ENCODE measurements at regions of chrX and their contacts with region 1.

Region 1: GRCh38 chrX:133670383-133670782 is 255.1 kb upstream of the GPC4 start:
- DNase-seq: peak in 1 of 2 experiments; percentile 13
- H3K4me3 ChIP-seq: no peak overlapping the region
- H3K27ac ChIP-seq: no peak overlapping the region
- H3K4me1 ChIP-seq: peaks cover 22% of the 10 kb centered on the region
- H3K27me3 ChIP-seq: no peaks in the 10 kb centered on the region
- CTCF ChIP-seq: peak; percentile 92

Region 2: DNA sequence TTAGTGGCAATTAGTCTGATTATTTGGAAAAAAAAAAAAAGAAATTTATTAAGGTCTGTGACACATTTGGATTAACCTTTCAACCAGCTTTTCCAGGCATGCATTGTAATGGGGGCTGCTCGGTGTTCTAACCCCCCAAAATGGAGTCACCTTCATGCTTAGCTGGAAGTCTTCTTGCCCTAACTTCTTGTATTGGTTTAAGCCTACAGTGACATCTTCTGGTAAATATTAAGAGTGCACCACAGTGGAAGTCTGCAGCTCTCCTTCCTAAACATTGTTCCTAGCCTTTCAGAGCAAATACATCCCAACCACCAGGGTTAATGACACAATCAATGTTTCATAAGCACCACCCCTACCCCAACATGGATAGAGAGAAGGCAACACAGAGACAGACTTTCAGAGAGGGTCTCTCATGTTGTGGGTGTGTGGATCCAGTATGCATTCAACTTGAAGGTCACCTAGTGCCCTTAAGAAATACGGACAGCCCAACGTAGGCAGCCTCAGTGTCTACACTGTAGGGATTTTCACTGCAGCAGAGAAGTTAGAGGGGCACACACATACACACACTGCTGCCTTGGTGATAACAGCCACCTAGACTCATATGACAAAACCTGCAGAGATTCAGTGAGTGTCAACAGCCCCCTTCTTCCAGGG is 1038.7 kb before region 1 on chrX:
- CTCF ChIA-PET with region 1: no interaction called
- POLR2A ChIA-PET with region 1: no interaction called
- intact Hi-C with region 1: loop called (anchors 5 kb)
- DNase-seq: peak; percentile 5 to 36
- H3K4me3 ChIP-seq: no peak overlapping the region
- H3K27ac ChIP-seq: no peak overlapping the region
- H3K4me1 ChIP-seq: no peaks in the 10 kb centered on the region
- H3K27me3 ChIP-seq: no peaks in the 10 kb centered on the region
- CTCF ChIP-seq: peak; percentile 76

Region 3: DNA sequence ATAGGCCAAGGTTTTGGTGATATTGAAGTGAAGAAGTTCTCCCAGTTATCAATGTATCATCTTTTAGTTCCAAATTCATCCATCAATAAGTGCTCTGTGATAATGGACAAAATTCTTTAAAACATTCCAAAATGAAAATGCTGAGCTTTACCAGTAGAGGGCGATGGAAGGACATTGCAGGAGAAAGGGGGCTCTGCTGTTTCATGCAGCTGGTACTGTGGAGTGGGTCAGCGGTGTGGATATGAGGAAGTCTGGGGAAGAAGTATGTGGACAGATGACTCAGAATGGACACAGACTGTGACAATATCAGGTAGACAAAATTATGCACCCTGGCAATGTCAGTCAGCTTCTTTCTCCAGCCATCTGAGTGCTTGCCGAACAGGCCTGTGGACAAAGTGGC is 665.3 kb before region 1 on chrX:
- CTCF ChIA-PET with region 1: no interaction called
- POLR2A ChIA-PET with region 1: no interaction called
- intact Hi-C with region 1: loop called (anchors 1 kb)
- DNase-seq: peak; percentile 4 to 36
- H3K4me3 ChIP-seq: no peak overlapping the region
- H3K27ac ChIP-seq: no peak overlapping the region
- H3K4me1 ChIP-seq: no peaks in the 10 kb centered on the region
- H3K27me3 ChIP-seq: no peaks in the 10 kb centered on the region
- CTCF ChIP-seq: peak; percentile 92

Region 4: GRCh38 chrX:133171962-133172708 is 498.2 kb before region 1 on chrX:
- CTCF ChIA-PET with region 1: no interaction called
- POLR2A ChIA-PET with region 1: no interaction called
- intact Hi-C with region 1: loop called (anchors 5 kb)
- DNase-seq: peak; percentile 19 to 51
- H3K4me3 ChIP-seq: no peak overlapping the region
- H3K27ac ChIP-seq: no peak overlapping the region
- H3K4me1 ChIP-seq: no peaks in the 10 kb centered on the region
- H3K27me3 ChIP-seq: no peaks in the 10 kb centered on the region
- CTCF ChIP-seq: peak; percentile 85

Region 5: DNA sequence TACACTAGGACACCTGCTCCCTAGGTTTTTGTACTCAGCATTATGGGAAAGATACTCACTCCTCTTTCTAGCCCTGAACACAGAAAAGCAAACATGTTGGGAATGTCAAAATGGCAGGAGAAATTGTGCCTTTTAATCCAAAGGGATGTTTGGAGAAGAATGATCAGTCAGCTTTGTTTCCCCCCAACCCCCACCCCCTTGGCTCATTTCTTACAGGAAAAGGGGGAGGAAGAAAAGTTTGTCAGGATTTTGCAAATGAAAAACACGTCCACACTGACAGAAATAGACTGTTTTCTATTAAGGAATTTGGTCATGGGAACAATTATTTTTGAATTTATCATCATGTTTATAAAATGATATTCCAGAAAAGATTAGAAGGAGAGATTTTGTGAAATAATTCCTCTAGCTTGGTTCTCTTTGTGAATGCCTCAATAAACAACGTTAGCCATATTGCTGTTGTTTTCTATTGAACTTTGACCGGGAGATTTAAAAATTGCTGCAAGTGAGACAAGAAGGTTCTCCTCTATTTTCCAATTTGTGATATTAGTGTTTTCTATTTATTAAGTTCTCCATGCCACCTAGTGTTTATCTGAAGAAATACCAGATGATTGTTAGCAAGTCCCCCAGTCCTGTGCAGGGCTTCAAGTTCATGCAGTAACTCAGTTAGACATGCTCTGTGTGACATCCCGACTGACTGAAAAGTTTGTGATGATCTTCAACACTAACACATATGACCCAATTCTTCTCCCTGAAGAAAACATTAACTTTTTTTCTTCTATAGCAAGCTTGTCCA is 420.9 kb before region 1 on chrX:
- CTCF ChIA-PET with region 1: no interaction called
- POLR2A ChIA-PET with region 1: no interaction called
- intact Hi-C with region 1: loop called (anchors 5 kb)
- DNase-seq: no peak
- H3K4me3 ChIP-seq: no peak overlapping the region
- H3K27ac ChIP-seq: no peak overlapping the region
- H3K4me1 ChIP-seq: 0 out of 2 replicates have a peak, but pooled peaks cover 2% of the 10 kb centered on the region
- H3K27me3 ChIP-seq: no peaks in the 10 kb centered on the region; the same call in 1 of the 2 replicates
- CTCF ChIP-seq: peak; percentile 65

Region 6: DNA sequence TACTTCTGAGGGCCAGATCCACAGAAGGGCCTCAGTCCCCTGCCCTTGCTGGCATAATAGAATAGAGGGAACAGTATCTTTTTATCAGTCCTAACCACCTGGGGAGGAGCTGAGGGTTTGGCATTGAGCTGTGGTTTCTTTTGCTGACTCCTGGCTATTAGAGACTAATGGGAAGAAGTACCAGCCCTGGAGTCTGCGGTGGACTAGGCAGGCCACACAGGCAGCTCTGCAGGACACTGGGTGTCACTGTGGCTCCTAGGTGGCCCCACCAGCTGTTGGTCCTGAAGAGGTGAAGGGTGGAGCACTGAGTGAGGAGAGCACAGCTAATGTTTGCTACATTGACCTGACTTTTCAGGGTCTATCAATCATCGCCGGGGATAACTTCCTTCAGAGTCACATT is 202.3 kb before region 1 on chrX:
- CTCF ChIA-PET with region 1: no interaction called
- POLR2A ChIA-PET with region 1: no interaction called
- intact Hi-C with region 1: loop called (anchors 1 kb)
- DNase-seq: peak in 1 of 2 experiments; percentile 17
- H3K4me3 ChIP-seq: no peak overlapping the region
- H3K27ac ChIP-seq: no peak overlapping the region
- H3K4me1 ChIP-seq: no peaks in the 10 kb centered on the region
- H3K27me3 ChIP-seq: no peaks in the 10 kb centered on the region
- CTCF ChIP-seq: no peak

Region 7: DNA sequence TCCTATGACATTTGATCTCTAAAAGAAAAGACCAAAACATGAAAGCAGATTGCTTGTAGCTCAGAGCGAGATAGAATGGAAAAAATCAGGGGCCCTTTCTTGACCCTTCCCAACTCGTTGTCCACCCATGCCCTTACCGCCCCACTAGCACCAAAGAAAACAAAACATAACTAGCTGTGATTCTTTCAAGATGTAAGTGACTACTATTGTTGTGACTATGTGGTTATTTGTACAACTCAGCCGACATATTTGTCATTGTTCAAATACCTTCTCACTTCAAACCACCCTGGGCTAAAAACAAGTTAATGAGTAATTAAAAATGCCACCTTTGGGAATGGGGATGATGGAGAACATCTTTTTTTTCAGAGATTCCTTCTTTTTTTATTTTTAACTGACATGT is 83.9 kb before region 1 on chrX:
- CTCF ChIA-PET with region 1: no interaction called
- POLR2A ChIA-PET with region 1: no interaction called
- intact Hi-C with region 1: loop called (anchors 5 kb)
- DNase-seq: peak; percentile 11 to 46
- H3K4me3 ChIP-seq: no peak overlapping the region
- H3K27ac ChIP-seq: no peak overlapping the region
- H3K4me1 ChIP-seq: peaks cover 9% of the 10 kb centered on the region; the same call in 1 of the 2 replicates
- H3K27me3 ChIP-seq: no peaks in the 10 kb centered on the region
- CTCF ChIP-seq: no peak

Region 8: GRCh38 chrX:133608406-133608805 is 62.0 kb before region 1 on chrX:
- CTCF ChIA-PET with region 1: no interaction called
- POLR2A ChIA-PET with region 1: no interaction called
- intact Hi-C with region 1: no loop called
- DNase-seq: no peak
- H3K4me3 ChIP-seq: no peak overlapping the region
- H3K27ac ChIP-seq: no peak overlapping the region
- H3K4me1 ChIP-seq: no peaks in the 10 kb centered on the region
- H3K27me3 ChIP-seq: no peaks in the 10 kb centered on the region
- CTCF ChIP-seq: no peak

Measured in PC-9 (cell line).